ENCODE measurements at regions of chr15 and their contacts with region 1.

Region 1: GRCh38 chr15:40928821-40929659 is at the start of gene DLL4:
- DNase-seq: peak; percentile 74 to 88 (median 82)
- ATAC-seq: peak; percentile 61 to 78 (median 65)
- H3K4me3 ChIP-seq: peak within 1 kb of the TSS; percentile 22 to 85 (median 70)
- H3K27ac ChIP-seq: peak within 1 kb of the TSS; percentile 51 to 90 (median 77)
- H3K4me1 ChIP-seq: peaks cover 3 to 80% (median 54%) of the 10 kb centered on the region in 12 donors
- H3K27me3 ChIP-seq: peaks cover 3 to 79% (median 23%) of the 10 kb centered on the region in 9 donors
- CTCF ChIP-seq: peak in 1 of 12 donors; percentile 11
- POLR2A ChIP-seq: peak in 1 of 2 donors; percentile 95
- total RNA-seq, gene DLL4: 4.7 to 20.8 (median 13.5) TPM

Region 2: GRCh38 chr15:40914486-40914885 is 14.6 kb before region 1 on chr15:
- intact Hi-C with region 1: loop called in 1 of 10 experiments (anchors 2 kb)
- DNase-seq: no peak
- ATAC-seq: no peak
- H3K4me3 ChIP-seq: no peak overlapping the region
- H3K27ac ChIP-seq: peak overlapping the region in 9 of 12 donors; percentile 7 to 90 (median 62)
- H3K4me1 ChIP-seq: peaks cover 0 to 59% (median 16%) of the 10 kb centered on the region in 12 donors
- H3K27me3 ChIP-seq: no peaks in the 10 kb centered on the region
- CTCF ChIP-seq: no peak
- POLR2A ChIP-seq: no peak

Region 3: GRCh38 chr15:40941528-40942336 is 12.7 kb after region 1 on chr15:
- intact Hi-C with region 1: loop called in 1 of 10 experiments (anchors 1 kb)
- DNase-seq: peak; percentile 86 to 92 (median 87)
- ATAC-seq: peak; percentile 22 to 83 (median 79)
- H3K4me3 ChIP-seq: peak overlapping the region; percentile 41 to 70 (median 59)
- H3K27ac ChIP-seq: peak overlapping the region; percentile 83 to 96 (median 92)
- H3K4me1 ChIP-seq: peaks cover 7 to 60% (median 48%) of the 10 kb centered on the region in 12 donors
- H3K27me3 ChIP-seq: no peaks in the 10 kb centered on the region
- CTCF ChIP-seq: peak; percentile 29 to 96 (median 67)
- POLR2A ChIP-seq: no peak

Region 4: GRCh38 chr15:41066516-41066915 is 137.5 kb after region 1 on chr15:
- intact Hi-C with region 1: no loop called
- DNase-seq: no peak
- ATAC-seq: no peak
- H3K4me3 ChIP-seq: no peak overlapping the region
- H3K27ac ChIP-seq: no peak overlapping the region
- H3K4me1 ChIP-seq: no peaks in the 10 kb centered on the region
- H3K27me3 ChIP-seq: no peaks in the 10 kb centered on the region
- CTCF ChIP-seq: no peak
- POLR2A ChIP-seq: no peak